Breast epithelium (tissue), 4 donors: ENCODE measurements at regions of chr10 and their contacts with region 1.

Region 1: GRCh38 chr10:99540657-99541531 is 8.2 kb downstream of the NKX2-3 start:
- DNase-seq: no peak
- H3K4me3 ChIP-seq: peak overlapping the region in 2 of 3 donors; percentile 29 to 55
- H3K27ac ChIP-seq: no peak overlapping the region
- H3K4me1 ChIP-seq: peaks cover 0 to 6% of the 10 kb centered on the region in 2 donors
- H3K27me3 ChIP-seq: peaks cover 0 to 86% of the 10 kb centered on the region in 2 donors
- CTCF ChIP-seq: no peak
- POLR2A ChIP-seq: no peak

Region 2: GRCh38 chr10:98516352-98516751 is 1024.5 kb before region 1 on chr10:
- intact Hi-C with region 1: loop called (anchors 5 kb)
- DNase-seq: no peak
- H3K4me3 ChIP-seq: no peak overlapping the region
- H3K27ac ChIP-seq: peak overlapping the region in 1 of 2 donors; percentile 54
- H3K4me1 ChIP-seq: no peaks in the 10 kb centered on the region
- H3K27me3 ChIP-seq: no peaks in the 10 kb centered on the region
- CTCF ChIP-seq: no peak
- POLR2A ChIP-seq: no peak

Region 3: GRCh38 chr10:99497343-99498025 is 43.4 kb before region 1 on chr10:
- intact Hi-C with region 1: loop called (anchors 2 kb)
- DNase-seq: no peak
- H3K4me3 ChIP-seq: no peak overlapping the region
- H3K27ac ChIP-seq: no peak overlapping the region
- H3K4me1 ChIP-seq: no peaks in the 10 kb centered on the region
- H3K27me3 ChIP-seq: no peaks in the 10 kb centered on the region
- CTCF ChIP-seq: no peak
- POLR2A ChIP-seq: no peak

Region 4: GRCh38 chr10:99520040-99520846 is 20.7 kb before region 1 on chr10:
- intact Hi-C with region 1: loop called (anchors 1 kb)
- DNase-seq: no peak
- H3K4me3 ChIP-seq: no peak overlapping the region
- H3K27ac ChIP-seq: no peak overlapping the region
- H3K4me1 ChIP-seq: no peaks in the 10 kb centered on the region
- H3K27me3 ChIP-seq: peaks cover 6 to 67% of the 10 kb centered on the region in 2 donors
- CTCF ChIP-seq: no peak
- POLR2A ChIP-seq: no peak